Colonic mucosa (tissue), 4 donors: ENCODE measurements at regions of chr5 and their contacts with region 1.

Region 1: DNA sequence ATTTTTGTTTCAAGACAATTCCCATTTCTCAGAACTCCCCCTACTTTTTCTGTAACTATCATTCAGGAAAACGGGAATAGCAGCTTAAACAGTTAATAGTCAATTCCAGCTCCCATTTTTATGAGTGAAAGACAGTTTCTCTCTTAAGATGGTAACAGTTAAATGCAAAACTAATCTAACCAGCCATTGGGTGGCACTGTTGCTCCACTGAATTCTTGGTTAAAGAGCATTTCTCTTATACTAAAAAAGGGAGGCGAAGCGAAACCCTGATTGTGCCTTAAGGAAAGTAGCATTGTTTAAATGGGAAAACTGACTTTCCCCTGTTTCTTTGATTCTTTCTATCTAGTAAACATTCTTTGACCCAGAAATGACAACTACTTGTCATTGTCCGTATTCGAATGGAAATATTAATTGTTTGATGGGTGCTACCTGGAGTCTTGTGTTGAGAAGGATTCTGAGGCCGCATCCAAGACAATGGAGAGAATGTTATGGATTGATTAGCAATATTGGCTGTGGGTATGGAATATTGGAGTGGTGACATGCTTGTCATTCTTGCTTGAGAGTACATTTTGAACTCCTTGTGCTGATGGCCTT is 507.8 kb downstream of the MAT2B start:
- DNase-seq: peak; percentile 59
- H3K4me3 ChIP-seq: no peak overlapping the region
- H3K27ac ChIP-seq: no peak overlapping the region
- H3K4me1 ChIP-seq: no peaks in the 10 kb centered on the region
- H3K27me3 ChIP-seq: no peaks in the 10 kb centered on the region
- CTCF ChIP-seq: peak; percentile 35

Region 2: GRCh38 chr5:163695830-163696578 is 317.2 kb before region 1 on chr5:
- intact Hi-C with region 1: loop called (anchors 5 kb)
- DNase-seq: peak; percentile 39
- H3K4me3 ChIP-seq: no peak overlapping the region
- H3K27ac ChIP-seq: no peak overlapping the region
- H3K4me1 ChIP-seq: no peaks in the 10 kb centered on the region
- H3K27me3 ChIP-seq: no peaks in the 10 kb centered on the region
- CTCF ChIP-seq: peak; percentile 64

Region 3: DNA sequence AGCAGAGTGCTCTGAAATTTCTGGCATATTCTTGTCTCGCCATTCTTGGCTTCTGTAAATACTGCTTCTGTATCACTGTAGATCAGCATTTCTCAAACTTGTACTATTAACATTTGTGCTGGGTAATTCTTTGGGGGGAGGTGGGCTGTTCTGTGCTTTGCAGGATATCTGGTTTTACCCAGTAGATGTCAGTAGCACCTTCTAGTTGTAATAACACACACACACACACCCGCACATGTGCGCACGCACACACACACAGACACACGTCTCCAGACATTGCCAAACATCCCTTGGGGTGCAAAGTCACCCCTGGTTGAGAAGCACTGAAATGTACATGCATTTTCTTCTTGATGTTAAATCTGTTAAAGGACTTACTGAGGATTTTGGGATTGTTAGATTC is 203.7 kb before region 1 on chr5:
- intact Hi-C with region 1: no loop called
- DNase-seq: no peak
- H3K4me3 ChIP-seq: no peak overlapping the region
- H3K27ac ChIP-seq: no peak overlapping the region
- H3K4me1 ChIP-seq: no peaks in the 10 kb centered on the region
- H3K27me3 ChIP-seq: no peaks in the 10 kb centered on the region
- CTCF ChIP-seq: no peak

Region 4: GRCh38 chr5:164504141-164504772 is 491.1 kb after region 1 on chr5:
- intact Hi-C with region 1: loop called (anchors 5 kb)
- DNase-seq: peak; percentile 37
- H3K4me3 ChIP-seq: no peak overlapping the region
- H3K27ac ChIP-seq: no peak overlapping the region
- H3K4me1 ChIP-seq: no peaks in the 10 kb centered on the region
- H3K27me3 ChIP-seq: no peaks in the 10 kb centered on the region
- CTCF ChIP-seq: peak; percentile 64

Region 5: DNA sequence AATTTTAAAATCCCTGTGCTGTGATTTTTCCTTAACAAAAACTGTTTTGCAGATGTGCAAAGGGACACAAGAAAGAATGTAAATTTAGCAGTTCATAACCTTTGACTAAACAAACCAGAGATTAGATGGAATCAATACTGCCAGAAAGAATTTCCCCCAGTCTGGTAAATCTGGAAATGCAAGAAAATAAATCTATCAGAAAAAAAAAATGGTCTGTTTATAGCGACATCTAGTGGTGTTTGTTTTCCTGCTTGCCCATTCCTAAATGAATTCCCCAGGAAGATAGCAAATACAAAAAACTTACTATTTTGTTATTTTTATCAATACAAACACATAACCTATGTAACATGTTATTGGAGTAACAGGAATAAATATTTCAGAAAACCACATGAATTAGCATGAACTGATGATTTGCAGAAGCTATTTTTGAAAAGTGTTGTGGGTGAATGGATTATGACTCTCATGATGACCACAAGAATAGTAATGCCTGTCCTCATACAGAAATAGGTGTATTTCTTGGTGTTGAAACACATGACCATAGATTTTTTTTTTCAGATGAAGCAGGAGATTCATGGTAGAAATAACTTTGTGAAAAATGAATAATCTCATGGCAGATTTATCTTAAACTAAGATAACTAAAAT is 1196.0 kb after region 1 on chr5:
- intact Hi-C with region 1: loop called (anchors 5 kb)
- DNase-seq: no peak
- H3K4me3 ChIP-seq: no peak overlapping the region
- H3K27ac ChIP-seq: no peak overlapping the region
- H3K4me1 ChIP-seq: no peaks in the 10 kb centered on the region
- H3K27me3 ChIP-seq: no peaks in the 10 kb centered on the region
- CTCF ChIP-seq: peak; percentile 68